Right cardiac atrium (tissue), 5 donors: ENCODE measurements at regions of chr12 and their contacts with region 1.

Region 1: DNA sequence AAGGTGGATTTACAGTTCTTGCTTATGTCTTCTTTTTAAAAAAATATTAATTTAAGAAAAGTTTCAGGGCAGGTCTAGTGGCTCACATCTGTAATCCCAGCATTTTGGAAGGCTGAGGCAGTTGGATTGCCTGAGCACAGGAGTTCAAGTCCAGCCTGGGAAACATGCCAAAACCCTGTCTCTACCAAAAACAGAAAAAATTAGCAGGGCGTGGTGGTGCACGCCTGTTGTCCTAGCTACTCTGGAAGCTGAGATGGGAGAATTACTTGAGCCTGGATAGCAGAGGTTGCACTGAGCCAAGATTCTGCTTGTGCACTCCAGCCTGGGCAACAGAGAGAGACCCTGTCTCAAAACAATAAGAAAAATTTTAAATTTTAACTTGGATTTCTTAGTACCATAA is 5.4 kb upstream of the TAS2R46 start:
- DNase-seq: peak; percentile 16 to 43 (median 42)
- ATAC-seq: peak; percentile 78 to 79
- H3K4me3 ChIP-seq: no peak overlapping the region
- H3K27ac ChIP-seq: no peak overlapping the region
- H3K4me1 ChIP-seq: no peaks in the 10 kb centered on the region
- H3K27me3 ChIP-seq: no peaks in the 10 kb centered on the region

Region 2: GRCh38 chr12:10928746-10929286 is 138.7 kb before region 1 on chr12 and contains the start of gene PRH2:
- intact Hi-C with region 1: no loop called
- DNase-seq: no peak
- ATAC-seq: no peak
- H3K4me3 ChIP-seq: no peak within 1 kb of the TSS
- H3K27ac ChIP-seq: no peak within 1 kb of the TSS
- H3K4me1 ChIP-seq: no peaks in the 10 kb centered on the region
- H3K27me3 ChIP-seq: no peaks in the 10 kb centered on the region
- total RNA-seq, gene PRH2: 0.53 TPM in 1 of 4 donors, not detected in the others

Region 3: DNA sequence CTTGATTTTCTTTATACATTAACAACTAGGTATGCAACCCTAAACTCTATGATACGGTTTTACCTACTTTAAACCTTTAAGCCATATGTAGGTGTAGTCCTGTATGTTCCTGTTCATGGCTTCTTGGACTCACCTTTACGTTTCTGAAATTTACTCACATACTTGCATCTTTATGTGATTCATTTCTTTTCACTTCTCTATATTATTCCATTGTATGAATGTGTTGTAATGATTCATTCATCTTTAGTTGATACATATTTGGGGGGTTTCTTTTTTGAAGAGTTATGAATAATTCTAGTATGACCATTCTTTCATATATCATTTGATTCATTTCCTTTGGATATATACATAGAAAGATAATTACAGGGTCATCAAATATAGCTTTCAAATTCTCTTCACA is 78.4 kb before region 1 on chr12:
- intact Hi-C with region 1: no loop called
- DNase-seq: no peak
- ATAC-seq: no peak
- H3K4me3 ChIP-seq: no peak overlapping the region
- H3K27ac ChIP-seq: no peak overlapping the region
- H3K4me1 ChIP-seq: peaks cover 5% of the 10 kb centered on the region
- H3K27me3 ChIP-seq: no peaks in the 10 kb centered on the region

Region 4: GRCh38 chr12:11039171-11039570 is 28.3 kb before region 1 on chr12:
- intact Hi-C with region 1: loop called in 1 of 4 experiments (anchors 2 kb)
- DNase-seq: no peak
- ATAC-seq: no peak
- H3K4me3 ChIP-seq: no peak overlapping the region
- H3K27ac ChIP-seq: no peak overlapping the region
- H3K4me1 ChIP-seq: no peaks in the 10 kb centered on the region
- H3K27me3 ChIP-seq: no peaks in the 10 kb centered on the region